ENCODE measurements at regions of chr3 and their contacts with region 1.

Region 1: DNA sequence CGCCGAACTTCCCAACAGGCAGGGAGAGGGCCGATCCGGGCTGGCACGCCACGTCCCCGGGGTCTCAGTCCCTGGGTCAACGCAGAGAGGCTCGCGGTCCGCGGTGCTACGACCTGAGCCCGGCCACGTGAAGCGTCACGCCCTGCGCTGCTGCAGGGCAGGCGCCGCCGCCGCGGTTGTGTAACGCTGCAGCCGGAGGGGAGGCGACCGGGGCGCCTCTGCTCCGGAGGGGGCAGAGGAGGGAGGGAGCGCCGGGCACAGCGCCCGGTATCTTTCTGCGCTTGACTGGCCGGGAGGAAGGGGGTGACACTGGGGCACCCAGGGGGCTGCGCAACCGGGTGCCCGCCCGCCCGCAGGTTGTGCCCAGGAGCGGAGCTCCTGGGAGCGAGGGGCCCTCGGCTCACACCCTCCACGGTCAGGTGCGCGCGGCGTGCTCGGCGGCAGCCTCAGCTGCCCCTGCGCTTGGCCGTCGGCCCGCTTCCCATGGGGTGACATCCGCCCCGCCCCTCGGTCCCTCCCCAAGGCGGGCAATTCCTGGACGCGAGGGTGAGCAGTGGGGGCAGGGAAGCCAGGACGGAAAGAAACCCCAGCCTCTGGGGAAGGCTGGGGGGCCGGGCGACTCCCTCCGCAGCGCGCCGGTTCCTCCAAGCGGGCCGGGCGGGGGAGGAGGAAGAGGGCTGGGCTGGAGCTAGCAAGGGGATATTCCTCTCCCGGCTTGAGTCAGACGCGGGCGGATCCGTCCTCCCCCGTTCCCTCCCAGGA is 852 bp upstream of the BHLHE40 start:
- DNase-seq: peak; percentile 94 to 98
- ATAC-seq: peak; percentile 65 to 77
- H3K4me3 ChIP-seq: peak overlapping the region; percentile 88
- H3K27ac ChIP-seq: peak overlapping the region; percentile 96 to 98
- H3K4me1 ChIP-seq: peaks cover 18% of the 10 kb centered on the region
- CTCF ChIP-seq: no peak
- EP300 ChIP-seq: no peak; a peak in 1 of 5 replicates
- POLR2A ChIP-seq: peak; percentile 6; the same call in 1 of the 2 replicates
- RAD21 ChIP-seq: peak in 1 of 2 experiments; percentile 19; a peak in 2 of 5 replicates

Region 2: DNA sequence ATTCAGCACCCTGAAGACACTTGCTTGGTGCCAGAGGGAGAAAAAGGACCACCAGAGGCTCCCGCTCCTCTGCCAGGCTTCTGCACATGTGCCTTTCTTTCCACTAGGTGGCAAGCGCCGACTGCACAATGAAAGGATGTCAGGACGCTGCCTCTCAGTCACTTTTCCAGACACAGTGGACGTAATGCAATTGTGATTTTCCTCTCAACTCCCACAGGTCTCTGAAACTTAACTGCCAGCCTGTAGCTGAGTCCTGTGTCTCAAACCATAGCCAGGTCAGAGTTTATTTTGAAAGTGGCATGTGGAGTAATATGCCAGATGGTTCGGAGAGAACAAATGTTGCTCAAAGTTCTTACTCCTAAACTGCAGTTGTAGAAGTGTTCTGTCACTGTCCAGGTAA is 322.3 kb before region 1 on chr3:
- CTCF ChIA-PET with region 1: interaction called, 15 read pairs
- POLR2A ChIA-PET with region 1: no interaction called
- DNase-seq: peak; percentile 62 to 77
- ATAC-seq: peak; percentile 98 to 100
- H3K4me3 ChIP-seq: no peak overlapping the region
- H3K27ac ChIP-seq: no peak overlapping the region
- H3K4me1 ChIP-seq: no peaks in the 10 kb centered on the region
- CTCF ChIP-seq: peak; percentile 93
- EP300 ChIP-seq: no peak
- POLR2A ChIP-seq: no peak
- RAD21 ChIP-seq: peak; percentile 97 to 98

Region 3: GRCh38 chr3:4741404-4742307 is 236.7 kb before region 1 on chr3:
- CTCF ChIA-PET with region 1: interaction called, 10 read pairs
- POLR2A ChIA-PET with region 1: interaction called, 8 read pairs
- DNase-seq: peak; percentile 92 to 97
- ATAC-seq: peak; percentile 77 to 84
- H3K4me3 ChIP-seq: no peak overlapping the region
- H3K27ac ChIP-seq: peak overlapping the region; percentile 61 to 84
- H3K4me1 ChIP-seq: peaks cover 63% of the 10 kb centered on the region
- CTCF ChIP-seq: no peak
- EP300 ChIP-seq: peak; percentile 49 to 69; a peak in 2 of 5 replicates
- POLR2A ChIP-seq: no peak
- RAD21 ChIP-seq: peak; percentile 29 to 48

Region 4: DNA sequence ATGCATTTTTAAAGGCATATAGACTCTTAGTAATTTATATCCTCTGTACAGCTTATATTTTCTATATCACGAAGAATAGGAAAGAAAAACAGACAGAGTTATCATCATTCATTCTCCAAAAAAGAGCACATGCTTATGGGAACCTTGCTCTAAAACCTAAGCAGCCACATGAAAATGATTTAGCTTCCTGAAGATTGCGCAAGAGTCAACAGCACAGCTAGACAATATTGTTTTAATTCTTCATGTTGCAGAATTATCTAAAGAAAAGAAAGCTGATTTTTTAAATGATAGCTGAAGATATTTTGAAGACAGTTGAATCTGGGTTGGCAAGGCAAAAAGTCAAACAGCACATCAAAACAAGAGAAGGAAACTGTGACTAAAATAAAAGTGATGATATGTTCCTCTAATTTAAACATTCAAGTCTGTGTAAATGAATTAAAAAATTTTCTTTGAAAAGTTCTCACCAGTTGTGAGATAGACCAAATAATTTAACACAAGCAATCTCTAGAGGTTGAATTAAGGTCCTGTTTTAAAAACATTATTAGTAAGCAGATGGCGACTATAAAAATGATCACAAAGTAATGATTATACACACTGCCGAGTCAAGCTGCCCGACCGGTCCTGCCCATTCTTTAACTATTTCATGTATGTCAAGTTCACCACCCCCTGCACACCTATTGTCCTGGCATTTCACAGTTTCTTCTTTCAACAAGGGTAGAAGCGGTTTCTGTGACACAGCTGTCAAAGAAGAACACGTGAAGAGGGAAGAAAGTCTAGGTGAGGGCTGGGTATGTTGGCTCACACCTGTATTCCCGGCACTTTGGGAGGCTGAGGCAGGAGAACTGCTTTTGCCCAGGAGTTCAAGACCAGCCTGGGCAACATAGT is 73.3 kb before region 1 on chr3:
- CTCF ChIA-PET with region 1: interaction called, 13 read pairs
- POLR2A ChIA-PET with region 1: no interaction called
- DNase-seq: no peak
- ATAC-seq: no peak
- H3K4me3 ChIP-seq: no peak overlapping the region
- H3K27ac ChIP-seq: peak overlapping the region in 1 of 2 experiments; percentile 29; a peak in 1 of 6 replicates
- H3K4me1 ChIP-seq: peaks cover 23% of the 10 kb centered on the region
- CTCF ChIP-seq: no peak
- EP300 ChIP-seq: no peak
- POLR2A ChIP-seq: no peak
- RAD21 ChIP-seq: no peak

Region 5: DNA sequence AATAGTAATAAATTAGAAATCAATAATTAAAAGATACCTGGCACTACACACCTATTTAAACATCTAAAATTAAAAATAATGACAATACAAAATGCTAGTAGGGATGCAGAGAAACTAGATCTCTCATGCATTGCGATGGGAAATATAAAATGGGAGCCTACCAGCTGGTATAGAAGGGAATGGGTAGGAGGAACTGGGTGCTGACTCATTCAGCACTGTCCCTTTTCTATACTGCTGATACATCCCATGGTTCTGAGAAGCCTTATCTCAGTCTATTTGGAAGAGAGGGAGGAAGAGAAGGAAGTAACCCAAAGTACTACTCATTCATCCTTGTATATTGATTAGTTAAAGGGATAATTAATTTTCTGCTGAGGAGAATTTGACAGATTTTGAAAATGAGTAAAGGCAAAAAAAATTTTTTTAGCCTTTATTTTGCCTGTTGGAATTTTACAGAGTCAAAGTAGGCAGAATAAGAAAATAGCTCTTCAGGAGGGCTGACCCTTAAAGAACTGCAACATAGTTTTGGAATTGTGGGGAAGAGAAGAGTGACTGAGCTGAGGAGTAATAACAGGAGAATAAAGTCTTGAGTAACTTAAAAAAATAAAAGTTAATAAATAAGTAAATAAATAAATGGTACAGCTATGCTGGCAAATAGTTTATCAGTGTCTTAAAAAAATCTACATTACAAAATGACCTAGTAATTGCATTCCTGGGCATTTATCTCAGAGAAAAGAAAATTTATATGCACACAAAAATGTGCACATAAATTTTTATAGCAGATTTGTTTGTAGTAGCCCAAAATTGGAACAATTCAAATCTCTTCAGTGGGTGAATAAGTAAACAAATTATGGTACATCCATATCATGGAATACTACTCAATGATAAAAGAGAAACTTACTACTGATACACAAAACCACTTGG is 14.5 kb before region 1 on chr3:
- CTCF ChIA-PET with region 1: interaction called, 12 read pairs
- POLR2A ChIA-PET with region 1: no interaction called
- DNase-seq: no peak
- ATAC-seq: peak in 1 of 2 experiments; percentile 69; a peak in 2 of 6 replicates
- H3K4me3 ChIP-seq: no peak overlapping the region
- H3K27ac ChIP-seq: peak overlapping the region in 1 of 2 experiments; percentile 39; a peak in 2 of 6 replicates
- H3K4me1 ChIP-seq: 0 out of 3 replicates have a peak, but pooled peaks cover 7% of the 10 kb centered on the region
- CTCF ChIP-seq: no peak
- EP300 ChIP-seq: no peak
- POLR2A ChIP-seq: no peak
- RAD21 ChIP-seq: no peak

Region 6: DNA sequence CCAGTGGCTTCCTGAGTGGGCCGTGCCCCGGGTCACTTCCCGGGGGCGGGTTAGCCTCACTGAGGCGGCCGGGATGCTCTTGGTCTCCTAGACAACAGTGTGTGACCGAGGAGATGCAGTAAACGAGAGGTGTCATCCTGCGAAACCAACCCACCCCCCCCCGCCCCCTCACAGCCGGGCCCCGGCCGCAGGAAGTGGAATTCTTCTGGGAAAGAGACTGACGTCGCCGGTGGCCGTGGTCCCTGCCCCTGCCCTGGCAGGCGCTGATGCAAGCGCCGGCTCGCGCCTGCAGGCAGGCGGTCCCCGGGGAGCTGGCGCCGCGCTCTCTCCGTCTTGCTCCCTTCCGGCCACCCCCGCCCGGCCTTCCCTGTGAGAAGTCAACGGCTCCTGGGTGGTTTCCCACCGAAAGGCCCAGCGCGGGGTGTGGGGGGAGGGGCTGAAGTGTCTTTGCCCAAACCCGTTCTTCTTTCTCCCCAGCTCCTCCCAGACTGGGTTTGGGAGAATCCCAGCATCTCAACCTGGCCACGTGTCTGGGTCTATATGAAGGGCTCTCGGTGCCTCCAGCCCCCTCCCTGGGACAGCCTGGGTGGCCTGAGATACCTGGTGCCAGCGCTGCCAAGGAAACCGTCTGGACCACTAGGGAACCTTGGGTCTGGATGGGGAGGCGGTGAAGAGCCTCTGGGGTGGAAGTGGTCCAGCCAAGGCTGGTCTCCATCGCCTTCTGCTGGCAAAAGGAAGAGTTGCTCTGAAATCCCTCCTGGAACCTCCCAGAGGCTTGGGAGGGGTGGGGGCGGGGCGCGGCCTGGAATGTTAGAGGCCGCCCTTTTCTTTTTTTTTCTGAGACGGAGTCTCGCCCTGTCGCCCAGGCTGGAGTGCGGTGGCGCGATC is 48.2 kb after region 1 on chr3:
- CTCF ChIA-PET with region 1: interaction called, 445 read pairs
- POLR2A ChIA-PET with region 1: interaction called, 367 read pairs
- DNase-seq: peak; percentile 79 to 98
- ATAC-seq: peak; percentile 85 to 87
- H3K4me3 ChIP-seq: peak overlapping the region; percentile 27
- H3K27ac ChIP-seq: peak overlapping the region; percentile 94 to 98
- H3K4me1 ChIP-seq: peaks cover 49% of the 10 kb centered on the region
- CTCF ChIP-seq: peak; percentile 70
- EP300 ChIP-seq: peak; percentile 96 to 99; a peak in 4 of 5 replicates
- POLR2A ChIP-seq: no peak
- RAD21 ChIP-seq: peak; percentile 93 to 95

Region 7: DNA sequence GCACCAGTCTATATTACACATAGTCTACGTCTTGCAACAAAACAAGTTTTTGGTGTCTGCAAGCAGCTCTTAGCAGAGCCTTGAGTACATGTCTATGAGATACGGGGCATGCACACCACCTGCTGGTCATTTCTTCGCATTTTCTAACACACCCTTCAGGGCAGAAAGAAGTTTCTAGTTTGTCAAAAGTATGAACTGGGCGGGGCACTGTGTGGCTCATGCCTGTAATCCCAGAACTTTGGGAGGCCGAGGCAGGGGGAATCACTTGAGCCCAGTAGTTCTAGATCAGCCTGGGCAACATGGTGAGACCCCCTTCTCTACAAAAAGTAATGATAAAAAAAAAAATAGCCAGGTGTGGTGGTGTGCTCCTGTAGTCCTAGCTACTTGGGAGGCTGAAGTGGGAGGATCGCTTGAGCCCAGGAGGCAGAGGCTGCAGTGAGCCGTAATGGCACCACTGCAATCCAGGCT is 79.5 kb after region 1 on chr3:
- CTCF ChIA-PET with region 1: interaction called, 92 read pairs
- POLR2A ChIA-PET with region 1: interaction called, 8 read pairs
- DNase-seq: peak; percentile 62 to 91
- ATAC-seq: peak; percentile 96
- H3K4me3 ChIP-seq: no peak overlapping the region
- H3K27ac ChIP-seq: peak overlapping the region; percentile 9 to 73; a peak in 4 of 6 replicates
- H3K4me1 ChIP-seq: peaks cover 16% of the 10 kb centered on the region; the same call in 2 of the 3 replicates
- CTCF ChIP-seq: peak; percentile 92
- EP300 ChIP-seq: no peak
- POLR2A ChIP-seq: no peak
- RAD21 ChIP-seq: peak; percentile 95 to 97